Activated B cell treated with CpG ODN at 0.5 μM for 24 hours (primary cell): ENCODE measurements at regions of chrX and their contacts with region 1.

Region 1: DNA sequence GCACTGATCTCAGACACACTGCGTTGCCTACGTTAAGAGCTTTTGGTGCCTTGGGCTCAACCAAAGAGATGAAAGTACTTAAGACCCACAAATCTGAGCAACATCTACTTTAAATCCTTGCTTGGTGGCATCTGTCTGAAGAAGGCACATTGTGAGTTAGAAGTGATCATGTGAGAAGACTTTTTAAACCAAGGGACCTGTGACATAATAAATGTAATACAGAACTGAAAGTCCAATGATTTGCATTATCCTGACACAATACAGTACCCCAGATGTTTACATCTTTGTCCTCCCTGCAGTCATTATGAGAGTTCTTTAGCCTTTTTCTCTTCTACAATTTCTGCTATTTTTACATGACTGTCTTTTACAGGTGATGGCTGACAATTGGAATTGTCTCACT is 96.7 kb upstream of the FTHL17 start:
- DNase-seq: no peak
- ATAC-seq: peak; percentile 90
- H3K4me3 Mint-ChIP-seq: peak overlapping the region; percentile 11
- H3K27ac Mint-ChIP-seq: peak overlapping the region; percentile 56
- H3K4me1 Mint-ChIP-seq: peaks cover 35% of the 10 kb centered on the region
- H3K27me3 Mint-ChIP-seq: no peaks in the 10 kb centered on the region
- CTCF ChIP-seq: no peak

Region 2: GRCh38 chrX:31099536-31100090 is 68.9 kb before region 1 on chrX:
- CTCF ChIA-PET with region 1: no interaction called
- POLR2A ChIA-PET with region 1: interaction called, 3 read pairs
- intact Hi-C with region 1: loop called (anchors 5 kb)
- DNase-seq: no peak
- ATAC-seq: peak; percentile 78
- H3K4me3 Mint-ChIP-seq: no peak overlapping the region
- H3K27ac Mint-ChIP-seq: peak overlapping the region; percentile 71
- H3K4me1 Mint-ChIP-seq: peaks cover 11% of the 10 kb centered on the region
- H3K27me3 Mint-ChIP-seq: no peaks in the 10 kb centered on the region
- CTCF ChIP-seq: no peak

Region 3: DNA sequence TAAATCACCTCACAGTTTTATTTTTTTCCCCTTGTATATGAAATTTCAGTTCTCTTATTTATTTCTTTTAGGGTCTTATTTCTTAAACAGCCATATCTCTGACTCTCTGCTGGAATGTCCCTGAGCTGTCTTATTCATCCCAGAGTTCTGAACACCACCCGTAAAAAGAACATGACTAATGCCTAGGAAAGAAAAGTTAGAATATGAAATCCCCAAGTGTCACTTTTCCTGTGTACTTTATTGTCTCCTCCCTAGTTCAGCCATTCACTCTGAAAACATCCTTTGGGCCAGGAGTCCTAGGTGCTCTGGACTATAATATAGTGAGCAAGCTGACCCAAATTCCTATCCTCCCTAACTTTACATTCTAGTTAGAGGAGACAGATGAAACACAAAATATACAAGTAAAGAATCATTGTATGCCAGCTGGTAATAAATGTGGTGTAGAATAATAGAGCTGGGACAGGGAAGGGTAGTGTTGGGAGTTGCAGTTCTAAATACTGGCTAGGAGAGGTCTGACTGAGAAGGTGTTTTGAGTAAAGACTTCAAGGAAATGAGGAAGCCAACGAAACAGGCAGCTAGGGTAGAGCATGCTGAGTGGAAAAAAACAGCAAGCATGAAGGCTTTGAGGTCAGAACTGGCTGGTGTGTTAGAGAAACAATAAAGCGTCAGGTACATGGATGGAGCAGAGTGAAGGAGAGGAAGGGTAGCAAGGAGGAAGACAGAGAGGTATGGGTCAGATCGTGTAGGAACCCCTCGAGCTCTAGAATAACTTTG is 56.1 kb before region 1 on chrX:
- CTCF ChIA-PET with region 1: no interaction called
- POLR2A ChIA-PET with region 1: no interaction called
- intact Hi-C with region 1: no loop called
- DNase-seq: no peak
- ATAC-seq: no peak
- H3K4me3 Mint-ChIP-seq: no peak overlapping the region
- H3K27ac Mint-ChIP-seq: no peak overlapping the region
- H3K4me1 Mint-ChIP-seq: no peaks in the 10 kb centered on the region
- H3K27me3 Mint-ChIP-seq: no peaks in the 10 kb centered on the region
- CTCF ChIP-seq: no peak

Region 4: DNA sequence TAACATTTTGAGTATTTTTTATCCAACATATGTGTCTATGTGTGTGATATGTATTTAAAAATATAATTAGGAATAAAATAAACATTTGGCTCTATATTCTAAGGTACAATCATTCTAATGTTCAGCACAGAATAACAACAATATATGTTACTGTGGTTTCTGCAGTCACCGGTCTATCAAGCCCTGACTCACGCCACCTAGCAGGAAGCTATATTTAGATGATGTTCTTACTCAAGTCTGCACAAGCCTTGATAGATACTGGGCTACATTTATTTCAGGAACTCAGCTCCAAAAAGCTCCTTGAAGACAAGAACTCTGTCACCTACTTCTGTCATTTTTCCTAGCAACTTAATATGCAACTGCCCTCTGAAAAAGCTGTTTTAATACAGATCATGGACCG is 55.3 kb after region 1 on chrX:
- CTCF ChIA-PET with region 1: no interaction called
- POLR2A ChIA-PET with region 1: no interaction called
- intact Hi-C with region 1: loop called (anchors 2 kb)
- DNase-seq: no peak
- ATAC-seq: peak; percentile 78
- H3K4me3 Mint-ChIP-seq: peak overlapping the region; percentile 39
- H3K27ac Mint-ChIP-seq: peak overlapping the region; percentile 69
- H3K4me1 Mint-ChIP-seq: peaks cover 30% of the 10 kb centered on the region
- H3K27me3 Mint-ChIP-seq: no peaks in the 10 kb centered on the region
- CTCF ChIP-seq: no peak